Heart right ventricle (tissue), 16 donors: ENCODE measurements at regions of chr19 and their contacts with region 1.

Region 1: GRCh38 chr19:1490311-1491113 is at the start of gene PCSK4:
- DNase-seq: peak; percentile 98 to 100
- ATAC-seq: peak; percentile 92 to 96 (median 96)
- H3K4me3 ChIP-seq: peak within 1 kb of the TSS; percentile 13 to 78 (median 62)
- H3K27ac ChIP-seq: peak within 1 kb of the TSS in 9 of 10 donors; percentile 47 to 75 (median 70)
- H3K4me1 ChIP-seq: peaks cover 3 to 30% (median 14%) of the 10 kb centered on the region in 9 donors
- H3K27me3 ChIP-seq: peaks cover 0 to 21% (median 6%) of the 10 kb centered on the region in 7 donors
- CTCF ChIP-seq: no peak
- total RNA-seq, gene PCSK4: 0.38 to 3.0 (median 1.4) TPM

Region 2: GRCh38 chr19:1406774-1407499 is 83.6 kb before region 1 on chr19:
- intact Hi-C with region 1: no loop called
- DNase-seq: peak; percentile 99 to 100
- ATAC-seq: peak; percentile 87 to 94 (median 92)
- H3K4me3 ChIP-seq: peak overlapping the region; percentile 12 to 99 (median 76)
- H3K27ac ChIP-seq: peak overlapping the region in 9 of 10 donors; percentile 68 to 98 (median 82)
- H3K4me1 ChIP-seq: peaks cover 28 to 61% (median 40%) of the 10 kb centered on the region in 9 donors
- H3K27me3 ChIP-seq: peaks cover 0 to 20% (median 0%) of the 10 kb centered on the region in 7 donors
- CTCF ChIP-seq: peak in 6 of 9 donors; percentile 24 to 45 (median 36)

Region 3: DNA sequence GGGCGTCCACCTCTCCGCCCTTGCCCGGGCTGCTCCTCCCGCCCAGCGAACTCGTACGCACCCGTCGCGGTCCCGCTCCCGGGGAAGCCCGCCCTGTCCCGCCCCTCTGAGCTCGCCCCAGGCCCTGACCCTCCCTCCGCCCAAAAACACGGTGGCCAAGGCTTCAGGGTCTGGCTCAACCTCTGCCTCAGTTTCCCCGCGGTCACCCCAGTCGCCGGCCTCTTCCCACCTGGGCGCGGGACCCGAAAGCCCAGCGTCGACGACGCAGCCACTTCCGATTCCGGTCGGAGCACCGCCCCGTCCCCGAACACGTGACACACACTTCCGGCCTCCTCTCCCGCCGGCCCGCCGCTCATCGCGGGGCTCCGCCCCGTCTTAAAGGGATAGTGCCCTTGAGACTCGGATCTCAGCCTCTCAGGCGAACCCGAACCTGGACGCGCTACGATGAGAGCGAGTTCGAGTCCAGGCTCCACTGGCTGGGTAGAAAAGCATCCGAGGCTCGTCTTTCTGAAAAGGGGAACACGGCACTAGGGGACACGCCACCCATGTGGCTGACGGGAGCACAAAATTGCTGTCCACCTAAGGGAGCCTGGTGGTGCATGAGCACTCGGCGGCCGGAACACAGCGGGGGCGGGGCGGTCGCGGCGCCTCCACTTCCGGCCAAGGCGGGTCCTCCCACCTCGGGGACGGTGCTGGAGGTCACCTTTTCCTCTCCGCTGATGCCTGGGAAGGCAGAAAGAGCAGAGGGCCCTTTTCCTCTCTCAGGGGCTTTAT is 11.4 kb before region 1 on chr19 and contains the start of gene C19orf25:
- intact Hi-C with region 1: loop called in 1 of 10 experiments (anchors 1 kb)
- DNase-seq: peak; percentile 93 to 95
- ATAC-seq: peak; percentile 90 to 98 (median 98)
- H3K4me3 ChIP-seq: peak within 1 kb of the TSS; percentile 67 to 100 (median 92)
- H3K27ac ChIP-seq: peak within 1 kb of the TSS in 9 of 10 donors; percentile 73 to 90 (median 79)
- H3K4me1 ChIP-seq: peaks cover 6 to 36% (median 21%) of the 10 kb centered on the region in 9 donors
- H3K27me3 ChIP-seq: no peaks in the 10 kb centered on the region
- CTCF ChIP-seq: no peak
- total RNA-seq, gene C19orf25: 12.7 to 19.9 (median 15.2) TPM

Region 4: GRCh38 chr19:1507763-1508509 is 17.4 kb after region 1 on chr19:
- intact Hi-C with region 1: loop called in 1 of 10 experiments (anchors 2 kb)
- DNase-seq: peak; percentile 88 to 95
- ATAC-seq: peak; percentile 84 to 96 (median 91)
- H3K4me3 ChIP-seq: peak overlapping the region in 9 of 10 donors; percentile 22 to 52 (median 42)
- H3K27ac ChIP-seq: peak overlapping the region; percentile 69 to 88 (median 76)
- H3K4me1 ChIP-seq: peaks cover 4 to 62% (median 28%) of the 10 kb centered on the region in 9 donors
- H3K27me3 ChIP-seq: peaks cover 0 to 49% (median 13%) of the 10 kb centered on the region in 7 donors
- CTCF ChIP-seq: no peak

Region 5: DNA sequence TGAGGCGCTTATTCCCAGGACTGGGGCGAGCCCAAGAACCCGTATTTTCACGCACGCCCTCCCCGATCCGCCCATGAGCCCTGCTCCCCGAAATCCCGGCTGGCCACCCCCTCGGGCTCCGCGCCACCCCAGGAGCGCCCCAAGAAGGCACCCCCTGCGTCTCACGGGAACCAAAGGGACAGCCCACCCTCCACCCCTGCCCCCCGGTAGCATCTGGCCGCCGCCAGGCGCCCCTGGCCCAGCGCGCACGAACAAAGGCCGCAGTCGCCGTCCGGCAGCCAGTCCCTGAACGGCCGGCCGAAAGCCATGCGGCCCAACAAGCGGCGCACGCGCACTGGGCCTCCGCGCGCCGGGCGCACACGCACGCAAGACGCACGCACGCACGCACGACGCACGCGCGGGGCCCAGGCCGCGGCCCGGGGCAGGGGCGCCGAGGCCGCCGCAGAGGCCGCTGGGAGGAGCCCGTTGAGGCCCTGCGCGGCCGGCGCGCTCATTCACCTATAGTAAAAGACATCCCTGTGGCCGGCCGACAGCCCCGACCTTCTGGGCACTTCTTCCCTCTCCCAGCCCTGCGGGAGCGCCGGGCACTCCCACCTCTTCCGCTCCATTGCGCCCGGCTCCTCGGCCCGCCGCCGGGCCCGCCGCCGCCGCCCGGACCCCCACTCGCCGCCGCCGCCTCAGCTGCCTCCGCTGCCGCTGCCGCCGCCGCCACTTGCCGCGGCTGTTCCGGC is 101.7 kb after region 1 on chr19:
- intact Hi-C with region 1: no loop called
- DNase-seq: peak; percentile 83 to 90
- ATAC-seq: peak; percentile 78 to 90 (median 84)
- H3K4me3 ChIP-seq: peak overlapping the region; percentile 63 to 90 (median 75)
- H3K27ac ChIP-seq: peak overlapping the region; percentile 85 to 99 (median 96)
- H3K4me1 ChIP-seq: peaks cover 4 to 29% (median 26%) of the 10 kb centered on the region in 9 donors
- H3K27me3 ChIP-seq: no peaks in the 10 kb centered on the region
- CTCF ChIP-seq: no peak